ENCODE measurements at regions of chr12 and their contacts with region 1.

Region 1: DNA sequence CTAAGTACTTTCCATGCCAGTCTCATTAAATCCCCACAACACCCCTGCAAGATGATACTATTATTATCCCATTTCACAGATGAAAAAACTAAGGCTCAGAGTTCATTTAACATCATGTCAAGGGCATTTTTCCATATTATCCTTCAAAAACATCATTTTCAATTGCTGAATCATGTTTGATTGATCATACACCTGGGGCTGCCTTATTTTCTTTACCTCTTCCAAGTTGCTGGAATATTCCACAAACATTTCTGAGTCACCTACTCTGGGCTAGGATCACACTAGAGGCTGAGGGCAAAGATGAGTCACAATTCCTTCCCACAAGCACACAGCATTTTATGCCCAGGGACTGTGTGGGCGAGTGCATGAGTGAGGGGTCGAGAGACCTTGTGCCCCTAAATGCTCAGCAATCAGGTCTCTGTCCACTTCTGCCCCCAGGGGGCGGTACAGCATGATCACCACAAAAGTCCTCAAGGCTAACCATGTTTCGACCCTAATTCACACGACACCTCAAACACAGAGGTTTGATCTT is 14.1 kb upstream of the TMEM119 start:
- DNase-seq: peak in 7 of 9 experiments; percentile 47 to 85 (median 68)
- ATAC-seq: peak; percentile 34
- H3K4me3 ChIP-seq: no peak overlapping the region
- H3K4me3 Mint-ChIP-seq: no peak overlapping the region
- H3K27ac ChIP-seq: no peak overlapping the region
- H3K27ac Mint-ChIP-seq: no peak overlapping the region
- H3K4me1 ChIP-seq: peaks cover 10% of the 10 kb centered on the region
- H3K4me1 Mint-ChIP-seq: peaks cover 22% of the 10 kb centered on the region
- H3K27me3 ChIP-seq: no peaks in the 10 kb centered on the region
- H3K27me3 Mint-ChIP-seq: no peaks in the 10 kb centered on the region
- CTCF ChIP-seq: peak; percentile 38

Region 2: GRCh38 chr12:108649669-108650068 is 37.7 kb after region 1 on chr12:
- CTCF ChIA-PET with region 1: interaction called, 39 read pairs
- POLR2A ChIA-PET with region 1: interaction called, 12 read pairs
- intact Hi-C with region 1: loop called in 1 of 2 experiments (anchors 2 kb)
- DNase-seq: no peak
- ATAC-seq: no peak
- H3K4me3 ChIP-seq: no peak overlapping the region
- H3K4me3 Mint-ChIP-seq: no peak overlapping the region
- H3K27ac ChIP-seq: no peak overlapping the region
- H3K27ac Mint-ChIP-seq: no peak overlapping the region
- H3K4me1 ChIP-seq: peaks cover 24% of the 10 kb centered on the region
- H3K4me1 Mint-ChIP-seq: peaks cover 29% of the 10 kb centered on the region
- H3K27me3 ChIP-seq: no peaks in the 10 kb centered on the region
- H3K27me3 Mint-ChIP-seq: no peaks in the 10 kb centered on the region
- CTCF ChIP-seq: no peak

Region 3: GRCh38 chr12:108696111-108696995 is 84.4 kb after region 1 on chr12:
- CTCF ChIA-PET with region 1: no interaction called
- POLR2A ChIA-PET with region 1: no interaction called
- intact Hi-C with region 1: no loop called
- DNase-seq: peak in 3 of 9 experiments; percentile 12 to 29 (median 25)
- ATAC-seq: peak; percentile 41
- H3K4me3 ChIP-seq: no peak overlapping the region
- H3K4me3 Mint-ChIP-seq: no peak overlapping the region
- H3K27ac ChIP-seq: no peak overlapping the region
- H3K27ac Mint-ChIP-seq: peak overlapping the region; percentile 1
- H3K4me1 ChIP-seq: peaks cover 11% of the 10 kb centered on the region
- H3K4me1 Mint-ChIP-seq: peaks cover 34% of the 10 kb centered on the region
- H3K27me3 ChIP-seq: no peaks in the 10 kb centered on the region
- H3K27me3 Mint-ChIP-seq: no peaks in the 10 kb centered on the region
- CTCF ChIP-seq: no peak

Region 4: DNA sequence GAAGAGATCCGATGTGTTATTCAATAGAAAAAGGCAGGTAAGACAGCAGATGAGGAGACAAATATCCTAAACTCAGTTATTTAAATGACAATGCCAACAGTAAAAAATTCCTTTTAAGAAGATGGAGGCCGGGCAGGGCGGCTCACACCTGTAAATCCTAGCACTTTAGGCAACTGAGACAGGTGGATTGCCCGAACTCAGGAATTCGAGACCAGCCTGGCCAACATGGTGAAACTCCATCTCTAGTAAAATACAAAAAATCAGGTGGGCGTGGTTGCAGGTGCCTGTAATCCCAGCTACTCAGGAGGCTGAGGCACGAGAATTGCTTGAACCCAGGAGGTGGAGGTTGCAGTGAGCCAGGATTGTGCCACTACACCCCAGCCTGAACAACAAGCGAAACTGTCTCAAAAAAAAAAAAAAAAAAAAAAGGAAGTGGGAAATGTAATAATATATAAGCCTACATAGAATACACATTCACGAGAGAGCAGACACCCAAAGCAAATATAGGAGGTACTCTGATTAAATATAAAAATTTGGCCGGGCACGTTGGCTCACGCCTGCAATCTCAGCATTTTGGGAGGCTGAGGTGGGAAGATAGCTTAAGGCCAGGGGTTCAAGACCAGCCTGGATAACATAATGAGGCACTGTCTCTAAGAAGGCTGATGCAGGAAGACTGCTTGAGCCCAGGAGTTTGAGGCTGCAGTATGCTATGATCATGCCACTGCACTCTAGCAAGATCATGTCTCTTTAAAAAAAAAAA is 100.4 kb after region 1 on chr12:
- CTCF ChIA-PET with region 1: no interaction called
- POLR2A ChIA-PET with region 1: no interaction called
- intact Hi-C with region 1: no loop called
- DNase-seq: no peak
- ATAC-seq: no peak
- H3K4me3 ChIP-seq: no peak overlapping the region
- H3K4me3 Mint-ChIP-seq: no peak overlapping the region
- H3K27ac ChIP-seq: no peak overlapping the region
- H3K27ac Mint-ChIP-seq: no peak overlapping the region
- H3K4me1 ChIP-seq: no peaks in the 10 kb centered on the region
- H3K4me1 Mint-ChIP-seq: no peaks in the 10 kb centered on the region
- H3K27me3 ChIP-seq: no peaks in the 10 kb centered on the region
- H3K27me3 Mint-ChIP-seq: no peaks in the 10 kb centered on the region
- CTCF ChIP-seq: no peak